Panc1 (cell line): ENCODE measurements at regions of chr7 and their contacts with region 1.

Region 1: GRCh38 chr7:143085109-143085508 is 33.0 kb downstream of the OR6V1 start:
- DNase-seq: no peak
- ATAC-seq: no peak
- H3K4me3 ChIP-seq: no peak overlapping the region
- H3K27ac ChIP-seq: no peak overlapping the region
- H3K4me1 ChIP-seq: no peaks in the 10 kb centered on the region
- H3K27me3 ChIP-seq: no peaks in the 10 kb centered on the region
- CTCF ChIP-seq: no peak

Region 2: GRCh38 chr7:142866361-142867058 is 218.6 kb before region 1 on chr7:
- CTCF ChIA-PET with region 1: no interaction called
- POLR2A ChIA-PET with region 1: interaction called, 23 read pairs
- in situ Hi-C with region 1: no loop called
- intact Hi-C with region 1: no loop called
- DNase-seq: no peak
- ATAC-seq: peak; percentile 86
- H3K4me3 ChIP-seq: no peak overlapping the region
- H3K27ac ChIP-seq: no peak overlapping the region
- H3K4me1 ChIP-seq: no peaks in the 10 kb centered on the region
- H3K27me3 ChIP-seq: peaks cover 6% of the 10 kb centered on the region; the same call in 1 of the 2 replicates
- CTCF ChIP-seq: peak; percentile 83